Activated CD4-positive, alpha-beta T cell treated with anti-CD3 and anti-CD28 coated beads for 36 hours (primary cell): ENCODE measurements at regions of chr17 and their contacts with region 1.

Region 1: GRCh38 chr17:16232391-16232790 is 15.4 kb downstream of the PIGL start:
- DNase-seq: no peak
- ATAC-seq: no peak
- H3K4me3 Mint-ChIP-seq: no peak overlapping the region
- H3K27ac Mint-ChIP-seq: no peak overlapping the region
- H3K4me1 Mint-ChIP-seq: peaks cover 22% of the 10 kb centered on the region
- H3K27me3 Mint-ChIP-seq: no peaks in the 10 kb centered on the region

Region 2: GRCh38 chr17:16285957-16286640 is 53.7 kb after region 1 on chr17:
- CTCF ChIA-PET with region 1: no interaction called
- POLR2A ChIA-PET with region 1: no interaction called
- intact Hi-C with region 1: loop called (anchors 1 kb)
- DNase-seq: peak; percentile 90
- ATAC-seq: peak; percentile 94
- H3K4me3 Mint-ChIP-seq: peak overlapping the region; percentile 66
- H3K27ac Mint-ChIP-seq: peak overlapping the region; percentile 96
- H3K4me1 Mint-ChIP-seq: peaks cover 53% of the 10 kb centered on the region
- H3K27me3 Mint-ChIP-seq: no peaks in the 10 kb centered on the region